Activated B cell treated with CpG ODN at 0.5 μM for 24 hours (primary cell): ENCODE measurements at regions of chr12 and their contacts with region 1.

Region 1: GRCh38 chr12:2890388-2891239 is at the start of gene TULP3:
- DNase-seq: peak; percentile 95
- ATAC-seq: peak; percentile 98
- H3K4me3 Mint-ChIP-seq: peak within 1 kb of the TSS; percentile 95
- H3K27ac Mint-ChIP-seq: peak within 1 kb of the TSS; percentile 91
- H3K4me1 Mint-ChIP-seq: peaks cover 25% of the 10 kb centered on the region
- H3K27me3 Mint-ChIP-seq: no peaks in the 10 kb centered on the region
- CTCF ChIP-seq: no peak
- total RNA-seq, gene TULP3: 7.0 and 7.3 TPM in 2 replicates

Region 2: GRCh38 chr12:2794736-2795289 is 95.8 kb before region 1 on chr12 and contains the start of gene FKBP4:
- CTCF ChIA-PET with region 1: no interaction called
- POLR2A ChIA-PET with region 1: interaction called, 7 read pairs
- intact Hi-C with region 1: loop called (anchors 1 kb)
- DNase-seq: peak; percentile 85
- ATAC-seq: peak; percentile 89
- H3K4me3 Mint-ChIP-seq: peak within 1 kb of the TSS; percentile 89
- H3K27ac Mint-ChIP-seq: peak within 1 kb of the TSS; percentile 81
- H3K4me1 Mint-ChIP-seq: peaks cover 20% of the 10 kb centered on the region
- H3K27me3 Mint-ChIP-seq: no peaks in the 10 kb centered on the region
- CTCF ChIP-seq: no peak
- total RNA-seq, gene FKBP4: 90.5 and 94.7 TPM in 2 replicates

Region 3: GRCh38 chr12:2825132-2825531 is 65.5 kb before region 1 on chr12:
- CTCF ChIA-PET with region 1: no interaction called
- POLR2A ChIA-PET with region 1: no interaction called
- intact Hi-C with region 1: no loop called
- DNase-seq: no peak
- ATAC-seq: no peak
- H3K4me3 Mint-ChIP-seq: no peak overlapping the region
- H3K27ac Mint-ChIP-seq: no peak overlapping the region
- H3K4me1 Mint-ChIP-seq: no peaks in the 10 kb centered on the region
- H3K27me3 Mint-ChIP-seq: no peaks in the 10 kb centered on the region
- CTCF ChIP-seq: no peak

Region 4: DNA sequence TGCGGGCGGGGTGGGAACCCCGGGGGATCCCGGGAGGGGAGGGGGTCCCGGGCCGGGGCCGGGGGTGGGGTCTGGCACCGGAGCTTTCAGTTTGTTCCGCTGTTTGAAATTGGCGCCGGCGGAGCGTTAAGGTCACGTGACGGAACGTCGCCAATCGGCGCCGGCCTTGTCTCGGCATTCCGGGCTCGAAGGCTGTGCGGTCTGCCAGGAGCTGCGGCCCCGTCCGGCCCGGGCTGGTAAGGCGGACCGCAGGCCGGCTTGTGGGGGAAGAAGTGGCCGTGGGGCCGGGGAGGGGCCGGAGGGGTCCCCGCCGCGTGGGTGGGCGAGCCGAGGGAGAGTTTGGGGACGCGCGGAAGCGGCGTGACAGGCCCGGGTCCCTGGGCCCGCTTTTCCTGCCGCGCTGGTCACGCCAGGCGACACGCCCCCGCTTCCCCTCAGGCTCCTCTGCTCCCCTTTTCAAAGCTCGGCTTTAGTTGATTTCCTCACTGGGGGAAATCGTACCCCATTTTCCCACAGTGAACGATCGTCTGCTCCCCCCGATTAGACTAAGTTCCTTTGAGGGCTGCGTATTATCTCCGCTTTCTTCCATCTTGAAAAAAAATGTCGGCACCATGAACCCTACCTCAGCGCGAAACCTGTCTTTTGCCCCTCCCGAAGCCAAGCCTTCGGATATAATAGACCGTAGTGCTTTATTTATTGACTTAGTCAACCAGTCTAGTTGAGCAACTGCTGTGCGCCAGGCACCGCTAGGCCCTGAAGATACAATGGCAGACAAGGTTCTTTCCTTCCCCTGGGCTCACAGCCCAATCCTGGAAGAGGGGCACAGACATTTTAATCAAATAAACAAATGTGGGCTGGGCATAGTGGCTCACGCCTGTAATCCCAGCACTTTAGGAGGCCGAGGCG is 13.3 kb before region 1 on chr12 and contains the starts of genes FOXM1 and RHNO1:
- CTCF ChIA-PET with region 1: interaction called, 4 read pairs
- POLR2A ChIA-PET with region 1: interaction called, 28 read pairs
- intact Hi-C with region 1: loop called (anchors 1 kb)
- DNase-seq: peak; percentile 89
- ATAC-seq: peak; percentile 83
- H3K4me3 Mint-ChIP-seq: peak within 1 kb of the TSS; percentile 94
- H3K27ac Mint-ChIP-seq: peak within 1 kb of the TSS; percentile 94
- H3K4me1 Mint-ChIP-seq: peaks cover 28% of the 10 kb centered on the region
- H3K27me3 Mint-ChIP-seq: no peaks in the 10 kb centered on the region
- CTCF ChIP-seq: no peak
- total RNA-seq, gene FOXM1: 1.8 and 2.8 TPM in 2 replicates
- total RNA-seq, gene RHNO1: 12.4 and 14.4 TPM in 2 replicates